Ovary (tissue), 10 donors: ENCODE measurements at regions of chr7 and their contacts with region 1.

Region 1: DNA sequence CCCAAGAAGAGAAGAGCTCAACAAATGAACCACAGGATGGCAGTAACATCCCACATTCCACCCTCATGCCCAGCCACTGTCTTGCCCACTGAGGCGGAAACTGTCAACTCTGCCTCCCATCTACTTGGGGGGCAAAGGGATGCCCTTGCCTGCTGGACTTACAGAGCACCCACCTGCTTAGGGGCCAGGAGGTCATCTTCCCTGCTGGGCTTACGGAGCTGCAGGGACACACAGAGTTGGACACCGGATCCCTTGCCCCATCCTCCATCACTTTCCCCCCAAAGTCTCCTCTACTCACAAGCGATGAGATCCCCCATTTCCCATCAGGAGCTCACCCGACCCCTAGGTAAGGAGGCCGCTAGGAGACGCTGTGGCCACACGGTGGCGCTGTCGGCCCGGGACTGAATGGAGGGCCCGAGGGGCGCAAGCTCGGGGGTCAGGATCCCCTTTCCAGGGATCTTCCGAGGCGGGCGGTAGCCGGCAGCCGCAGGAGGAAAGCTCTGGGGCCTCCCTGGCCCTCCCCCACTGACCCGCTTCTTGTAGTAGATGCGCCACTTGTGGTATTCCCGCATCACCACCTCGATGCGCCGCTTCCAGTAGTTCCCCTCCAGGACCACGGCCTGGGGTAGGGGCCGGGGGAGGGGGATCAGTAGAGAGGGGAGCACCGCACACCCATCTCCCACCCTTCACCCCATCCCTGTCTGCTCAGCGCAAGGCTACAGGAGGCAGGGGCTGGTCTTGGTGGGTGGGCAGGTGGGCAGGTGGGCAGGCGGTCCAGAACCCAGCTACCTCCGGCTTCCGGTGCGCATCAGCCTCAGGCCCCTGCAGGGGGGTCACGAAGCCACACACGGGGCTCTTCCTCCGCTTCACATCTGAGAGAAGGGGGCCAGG is 17.3 kb downstream of the MLXIPL start:
- DNase-seq: peak; percentile 48 to 77 (median 70)
- H3K4me3 ChIP-seq: no peak overlapping the region
- H3K27ac ChIP-seq: no peak overlapping the region
- H3K4me1 ChIP-seq: no peaks in the 10 kb centered on the region
- H3K27me3 ChIP-seq: no peaks in the 10 kb centered on the region
- CTCF ChIP-seq: peak; percentile 69 to 84 (median 82)
- EP300 ChIP-seq: no peak
- POLR2A ChIP-seq: no peak

Region 2: DNA sequence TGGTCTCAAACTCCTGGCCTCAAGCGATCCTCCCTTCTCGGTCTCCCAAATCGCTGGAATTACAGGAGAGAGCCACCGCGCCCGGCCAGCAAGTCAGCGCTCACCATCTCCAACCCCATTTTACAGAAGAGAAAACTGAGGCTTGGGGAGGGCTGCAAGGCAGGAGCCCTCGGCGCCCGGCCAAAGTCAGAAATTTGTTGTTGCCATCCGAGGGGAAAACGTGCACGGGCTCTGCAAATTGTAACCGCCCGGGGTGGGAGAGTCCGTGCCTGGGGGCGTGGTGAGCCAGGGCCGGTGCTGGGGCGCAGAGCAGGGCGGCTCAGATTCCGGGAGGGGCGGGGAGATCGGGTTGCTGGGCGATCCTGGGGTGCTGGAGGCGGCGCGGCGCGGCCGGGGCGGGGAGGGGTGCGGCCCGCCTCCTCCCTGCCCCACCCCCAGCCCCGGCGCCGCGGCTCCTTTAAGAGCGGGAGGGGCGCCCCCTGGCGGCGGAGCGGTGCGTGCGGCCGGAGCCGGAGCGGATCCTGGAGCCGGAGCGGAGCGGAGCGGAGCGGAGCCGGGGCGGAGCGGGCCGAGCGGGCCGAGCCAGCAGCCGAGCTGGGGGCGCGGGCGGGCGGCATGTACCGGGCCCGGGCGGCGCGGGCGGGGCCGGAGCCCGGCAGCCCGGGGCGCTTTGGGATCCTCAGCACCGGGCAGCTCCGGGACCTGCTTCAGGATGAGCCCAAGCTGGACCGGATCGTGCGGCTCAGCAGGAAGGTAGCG is 60.5 kb after region 1 on chr7 and contains the start of gene VPS37D:
- intact Hi-C with region 1: loop called in 2 of 4 experiments (anchors 10 kb)
- DNase-seq: peak; percentile 89 to 95 (median 94)
- H3K4me3 ChIP-seq: peak within 1 kb of the TSS; percentile 43
- H3K27ac ChIP-seq: no peak within 1 kb of the TSS
- H3K4me1 ChIP-seq: peaks cover 8% of the 10 kb centered on the region
- H3K27me3 ChIP-seq: no peaks in the 10 kb centered on the region
- CTCF ChIP-seq: peak; percentile 56 to 93 (median 91)
- EP300 ChIP-seq: no peak
- POLR2A ChIP-seq: no peak
- total RNA-seq, gene VPS37D: 4.7 to 8.8 (median 6.3) TPM

Region 3: DNA sequence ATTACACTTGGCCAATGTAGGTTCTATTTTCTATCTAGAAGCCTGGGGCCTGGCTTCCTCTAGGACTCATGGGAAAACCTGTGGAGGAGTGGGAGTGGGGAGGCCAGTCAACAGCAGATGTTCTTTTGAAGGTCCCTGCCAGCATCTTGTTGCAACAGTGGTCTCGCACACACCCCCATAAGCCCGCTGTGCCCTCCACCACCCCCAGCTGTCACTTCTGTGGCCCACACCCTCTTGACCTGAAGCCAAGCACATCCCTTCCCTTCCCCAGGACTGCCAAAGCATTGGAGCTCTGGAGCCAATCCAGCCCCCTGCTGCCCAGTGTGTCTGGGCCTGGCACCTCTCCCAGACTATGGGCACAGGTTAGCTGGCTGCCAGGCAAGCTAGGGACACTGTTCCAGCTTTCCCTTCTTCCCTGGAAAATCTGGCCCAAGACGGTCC is 114.4 kb after region 1 on chr7:
- intact Hi-C with region 1: loop called (anchors 1 to 5 kb)
- DNase-seq: no peak
- H3K4me3 ChIP-seq: no peak overlapping the region
- H3K27ac ChIP-seq: no peak overlapping the region
- H3K4me1 ChIP-seq: no peaks in the 10 kb centered on the region
- H3K27me3 ChIP-seq: no peaks in the 10 kb centered on the region
- CTCF ChIP-seq: no peak
- EP300 ChIP-seq: no peak
- POLR2A ChIP-seq: no peak

Region 4: DNA sequence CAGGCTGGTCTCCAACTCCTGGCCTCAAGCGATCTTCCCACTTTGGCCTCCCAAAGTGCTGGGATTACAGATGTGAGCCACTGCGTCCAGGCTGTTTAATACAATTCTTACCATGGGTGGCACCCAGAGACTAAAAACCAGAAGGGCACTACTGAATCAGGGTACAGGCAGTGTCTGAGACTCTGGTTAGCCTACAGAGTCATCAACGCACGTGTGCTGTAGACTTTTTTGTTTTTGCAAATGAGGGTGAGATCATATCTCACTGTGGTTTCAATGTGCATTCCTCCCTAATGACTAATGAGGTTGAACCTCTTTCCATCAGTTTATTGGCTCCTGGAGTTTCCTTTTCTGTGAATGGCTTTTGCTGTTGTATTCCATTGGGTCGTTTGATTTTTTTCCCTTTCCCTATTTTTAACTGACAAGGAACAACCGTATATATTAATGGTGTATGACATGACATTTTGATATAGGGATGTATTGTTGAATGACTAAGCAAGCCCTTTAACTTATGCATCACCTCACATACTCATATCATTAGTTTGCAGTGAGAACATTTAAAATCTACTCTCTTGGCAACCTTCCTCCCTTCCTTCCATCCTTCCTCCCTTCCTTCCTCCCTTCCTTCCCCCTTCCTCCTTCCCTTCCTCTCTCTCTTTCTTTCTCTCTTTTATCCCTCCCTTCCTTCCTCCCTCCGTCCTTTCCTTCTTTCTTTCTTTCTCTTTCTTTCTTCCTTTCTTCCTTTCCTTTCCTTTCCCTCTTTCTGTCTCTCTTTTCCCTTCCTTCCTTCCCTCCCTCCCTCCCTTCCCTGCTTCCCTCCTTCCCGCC is 244.6 kb after region 1 on chr7:
- intact Hi-C with region 1: loop called in 3 of 4 experiments (anchors 5 to 10 kb)
- DNase-seq: no peak
- H3K4me3 ChIP-seq: no peak overlapping the region
- H3K27ac ChIP-seq: no peak overlapping the region
- H3K4me1 ChIP-seq: no peaks in the 10 kb centered on the region
- H3K27me3 ChIP-seq: no peaks in the 10 kb centered on the region
- CTCF ChIP-seq: no peak
- EP300 ChIP-seq: no peak
- POLR2A ChIP-seq: no peak

Region 5: DNA sequence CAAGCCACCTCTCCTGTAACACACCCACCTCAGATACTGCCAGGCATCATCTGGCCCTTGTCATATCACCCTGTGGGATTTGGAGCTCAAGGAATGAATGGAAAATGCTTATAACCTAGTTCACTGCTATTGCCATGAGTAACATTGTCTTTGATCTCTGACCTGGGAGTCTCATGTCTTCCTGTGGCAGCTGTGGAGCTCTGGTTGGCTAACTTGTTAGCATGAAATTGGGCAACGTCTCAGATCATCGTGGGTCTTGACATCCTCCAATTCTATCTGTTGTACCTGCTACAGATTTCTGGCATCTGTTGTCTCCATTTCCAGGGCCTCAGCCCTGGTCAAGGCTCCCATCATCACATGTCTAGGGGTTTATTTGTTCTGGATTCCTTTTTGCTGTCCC is 251.8 kb after region 1 on chr7:
- intact Hi-C with region 1: loop called in 3 of 4 experiments (anchors 5 to 10 kb)
- DNase-seq: no peak
- H3K4me3 ChIP-seq: no peak overlapping the region
- H3K27ac ChIP-seq: no peak overlapping the region
- H3K4me1 ChIP-seq: no peaks in the 10 kb centered on the region
- H3K27me3 ChIP-seq: no peaks in the 10 kb centered on the region
- CTCF ChIP-seq: no peak
- EP300 ChIP-seq: no peak
- POLR2A ChIP-seq: no peak